GM12878 (cell line): ENCODE measurements at regions of chr17 and their contacts with region 1.

Region 1: DNA sequence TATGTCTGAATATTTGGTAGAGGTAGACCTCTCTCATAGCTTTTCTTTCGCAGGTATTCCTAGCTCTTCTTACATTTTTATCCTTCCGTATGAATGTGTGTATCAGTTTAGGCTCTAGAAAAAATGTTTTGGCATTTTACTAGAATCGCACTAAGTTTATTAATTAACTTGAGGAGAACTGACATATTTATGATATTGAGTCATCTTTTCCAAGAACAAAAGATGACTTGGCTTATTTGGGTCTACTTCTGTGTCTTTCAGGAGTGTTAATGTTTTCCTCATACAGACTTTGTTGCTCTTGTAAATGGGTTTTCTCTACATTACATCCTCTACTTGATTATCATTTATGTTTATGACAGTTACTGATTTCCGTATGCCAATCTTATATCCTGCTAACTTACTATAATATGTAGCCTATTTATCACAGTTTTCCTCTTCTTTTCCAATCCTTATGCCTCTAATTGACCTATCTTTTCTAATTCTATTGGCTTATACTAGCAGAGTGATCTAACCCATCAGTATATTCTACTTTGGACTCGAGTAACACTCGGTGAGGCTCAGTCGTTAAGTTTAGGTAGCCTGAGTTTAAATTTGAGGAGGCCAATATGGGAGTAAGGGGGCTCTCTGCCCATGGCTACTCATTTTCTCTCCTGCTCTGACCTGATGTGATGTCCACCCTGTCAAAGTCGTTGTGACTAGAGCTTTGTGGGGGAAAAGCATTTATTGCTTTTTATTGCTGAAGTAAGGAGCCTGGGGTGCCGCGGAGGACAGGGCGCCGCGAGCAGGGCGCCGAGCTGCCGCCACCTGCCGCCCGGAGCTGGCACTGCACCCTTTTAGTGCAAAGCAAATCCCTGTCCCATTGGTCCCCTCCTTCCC is 20.0 kb downstream of the ST6GALNAC1 start:
- DNase-seq: no peak
- ATAC-seq: peak; percentile 99
- H3K4me3 ChIP-seq: no peak overlapping the region
- H3K27ac ChIP-seq: no peak overlapping the region
- H3K4me1 ChIP-seq: no peaks in the 10 kb centered on the region
- H3K27me3 ChIP-seq: peaks cover 2 to 3% of the 10 kb centered on the region in 2 experiments; a peak in 3 of 4 replicates
- CTCF ChIP-seq: peak; percentile 90 to 97 (median 93); a peak in 5 of 6 replicates
- EP300 ChIP-seq: no peak
- POLR2A ChIP-seq: no peak
- RAD21 ChIP-seq: peak; percentile 81

Region 2: GRCh38 chr17:76153640-76154039 is 469.9 kb before region 1 on chr17:
- CTCF ChIA-PET with region 1: no interaction called
- POLR2A ChIA-PET with region 1: no interaction called
- RAD21 ChIA-PET with region 1: no interaction called
- SMC1A ChIA-PET with region 1: no interaction called
- in situ Hi-C with region 1: no loop called
- intact Hi-C with region 1: no loop called
- DNase-seq: no peak
- ATAC-seq: no peak
- H3K4me3 ChIP-seq: no peak overlapping the region
- H3K27ac ChIP-seq: no peak overlapping the region
- H3K4me1 ChIP-seq: no peaks in the 10 kb centered on the region
- H3K27me3 ChIP-seq: no peaks in the 10 kb centered on the region
- CTCF ChIP-seq: no peak
- EP300 ChIP-seq: no peak
- POLR2A ChIP-seq: no peak
- RAD21 ChIP-seq: no peak

Region 3: DNA sequence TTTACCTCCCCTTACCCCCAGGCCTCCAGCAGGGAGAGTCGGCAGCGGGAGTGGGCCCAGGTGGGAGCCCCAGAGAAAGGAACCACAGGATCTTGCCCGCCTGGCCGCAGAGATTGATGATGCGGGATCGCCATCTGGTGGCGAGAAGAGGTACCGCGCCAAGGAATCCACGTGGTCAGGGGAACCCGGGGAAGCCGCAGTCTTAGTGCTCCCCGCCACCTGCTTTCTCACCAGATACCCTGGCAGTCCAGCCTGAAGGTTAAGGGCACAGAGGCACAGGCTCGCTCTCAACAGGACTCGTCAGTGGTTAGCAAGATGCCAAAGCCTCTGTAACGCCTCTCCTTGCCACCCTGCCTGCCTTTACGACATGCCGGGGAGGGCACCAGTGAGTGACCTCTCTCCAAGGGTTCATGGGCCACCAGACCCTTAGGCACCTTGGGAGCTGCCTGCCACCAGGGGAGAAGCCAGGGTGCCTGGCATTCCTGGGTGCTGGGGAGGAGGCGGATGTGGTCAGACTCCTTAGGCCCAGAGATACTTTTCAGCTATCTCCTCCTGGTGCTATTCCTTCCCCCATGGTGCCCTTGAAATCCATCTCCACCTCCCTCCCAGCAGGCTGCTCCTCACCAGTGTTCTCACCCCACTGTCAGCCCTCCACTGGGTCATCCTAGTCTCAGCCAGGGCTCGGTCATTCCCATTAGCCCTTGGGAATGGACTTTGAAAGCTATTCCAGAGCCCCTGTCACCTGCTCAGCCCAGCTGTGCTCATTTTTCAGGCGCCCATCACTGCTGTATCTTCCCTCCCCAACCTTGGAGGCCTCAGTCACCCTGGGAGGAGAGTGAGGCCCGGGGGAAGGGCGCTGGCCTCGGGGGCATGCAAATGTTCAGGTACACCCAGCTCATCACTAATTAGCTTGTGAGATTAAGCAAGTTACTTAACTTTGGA is 116.8 kb before region 1 on chr17:
- CTCF ChIA-PET with region 1: interaction called, 12 read pairs
- POLR2A ChIA-PET with region 1: no interaction called
- RAD21 ChIA-PET with region 1: interaction called, 4 read pairs
- SMC1A ChIA-PET with region 1: no interaction called
- in situ Hi-C with region 1: no loop called
- intact Hi-C with region 1: no loop called
- DNase-seq: peak; percentile 40
- ATAC-seq: peak; percentile 92
- H3K4me3 ChIP-seq: no peak overlapping the region
- H3K27ac ChIP-seq: no peak overlapping the region
- H3K4me1 ChIP-seq: peaks cover 9% of the 10 kb centered on the region
- H3K27me3 ChIP-seq: no peaks in the 10 kb centered on the region; a peak in 1 of 4 replicates
- CTCF ChIP-seq: peak; percentile 89 to 99 (median 92); a peak in 5 of 6 replicates
- EP300 ChIP-seq: no peak
- POLR2A ChIP-seq: no peak
- RAD21 ChIP-seq: peak; percentile 97

Region 4: GRCh38 chr17:76534831-76535732 is 88.4 kb before region 1 on chr17:
- CTCF ChIA-PET with region 1: no interaction called
- POLR2A ChIA-PET with region 1: no interaction called
- RAD21 ChIA-PET with region 1: no interaction called
- SMC1A ChIA-PET with region 1: no interaction called
- in situ Hi-C with region 1: no loop called
- intact Hi-C with region 1: no loop called
- DNase-seq: no peak
- ATAC-seq: no peak
- H3K4me3 ChIP-seq: no peak overlapping the region
- H3K27ac ChIP-seq: no peak overlapping the region
- H3K4me1 ChIP-seq: no peaks in the 10 kb centered on the region
- H3K27me3 ChIP-seq: peaks cover 5 to 6% of the 10 kb centered on the region in 2 experiments
- CTCF ChIP-seq: no peak
- EP300 ChIP-seq: no peak
- POLR2A ChIP-seq: no peak
- RAD21 ChIP-seq: no peak

Region 5: GRCh38 chr17:76547184-76547641 is 76.3 kb before region 1 on chr17:
- CTCF ChIA-PET with region 1: interaction called, 20 read pairs
- POLR2A ChIA-PET with region 1: no interaction called
- RAD21 ChIA-PET with region 1: interaction called, 9 read pairs
- SMC1A ChIA-PET with region 1: interaction called, 10 read pairs
- in situ Hi-C with region 1: no loop called
- intact Hi-C with region 1: no loop called
- DNase-seq: no peak
- ATAC-seq: peak; percentile 93
- H3K4me3 ChIP-seq: no peak overlapping the region
- H3K27ac ChIP-seq: no peak overlapping the region
- H3K4me1 ChIP-seq: no peaks in the 10 kb centered on the region; the same call in 1 of the 2 replicates
- H3K27me3 ChIP-seq: peaks cover 0 to 3% of the 10 kb centered on the region in 2 experiments; a peak in 3 of 4 replicates
- CTCF ChIP-seq: peak; percentile 65 to 82 (median 80)
- EP300 ChIP-seq: no peak
- POLR2A ChIP-seq: no peak
- RAD21 ChIP-seq: peak; percentile 79

Region 6: DNA sequence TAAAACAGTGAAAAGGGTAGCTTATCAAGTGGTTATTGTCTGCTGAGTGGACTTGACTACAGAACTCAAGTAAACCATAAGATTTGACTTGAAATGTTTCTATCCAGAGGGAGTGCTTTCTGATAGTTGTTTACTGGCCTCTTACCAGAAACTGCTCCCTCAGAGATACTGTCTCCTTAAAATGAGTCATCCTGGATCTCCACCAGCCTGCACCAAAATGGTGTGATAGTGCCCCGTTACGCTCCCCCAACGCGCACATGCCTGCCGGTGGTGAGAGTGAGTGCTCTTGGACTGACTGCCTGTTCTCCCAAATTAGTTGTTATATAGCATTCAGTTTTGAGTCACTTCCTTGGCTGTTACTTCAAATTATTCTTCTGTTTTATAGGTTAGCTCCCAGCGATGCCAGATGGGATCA is 60.8 kb before region 1 on chr17:
- CTCF ChIA-PET with region 1: interaction called, 146 read pairs
- POLR2A ChIA-PET with region 1: interaction called, 5 read pairs
- RAD21 ChIA-PET with region 1: interaction called, 33 read pairs
- SMC1A ChIA-PET with region 1: interaction called, 87 read pairs
- in situ Hi-C with region 1: no loop called
- intact Hi-C with region 1: loop called (anchors 2 kb)
- DNase-seq: no peak
- ATAC-seq: peak; percentile 9; the same call in 2 of the 3 replicates
- H3K4me3 ChIP-seq: 0 out of 2 replicates have a peak overlapping the region, but pooled peaks have one; percentile 1
- H3K27ac ChIP-seq: peak overlapping the region; percentile 33; the same call in 1 of the 2 replicates
- H3K4me1 ChIP-seq: peaks cover 23% of the 10 kb centered on the region
- H3K27me3 ChIP-seq: no peaks in the 10 kb centered on the region
- CTCF ChIP-seq: no peak
- EP300 ChIP-seq: no peak
- POLR2A ChIP-seq: no peak
- RAD21 ChIP-seq: no peak

Region 7: GRCh38 chr17:76578344-76578979 is 45.0 kb before region 1 on chr17:
- CTCF ChIA-PET with region 1: interaction called, 13 read pairs
- POLR2A ChIA-PET with region 1: interaction called, 4 read pairs
- RAD21 ChIA-PET with region 1: no interaction called
- SMC1A ChIA-PET with region 1: no interaction called
- in situ Hi-C with region 1: no loop called
- intact Hi-C with region 1: no loop called
- DNase-seq: no peak
- ATAC-seq: no peak
- H3K4me3 ChIP-seq: no peak overlapping the region
- H3K27ac ChIP-seq: no peak overlapping the region
- H3K4me1 ChIP-seq: peaks cover 24% of the 10 kb centered on the region
- H3K27me3 ChIP-seq: no peaks in the 10 kb centered on the region
- CTCF ChIP-seq: no peak
- EP300 ChIP-seq: no peak
- POLR2A ChIP-seq: no peak
- RAD21 ChIP-seq: no peak

Region 8: DNA sequence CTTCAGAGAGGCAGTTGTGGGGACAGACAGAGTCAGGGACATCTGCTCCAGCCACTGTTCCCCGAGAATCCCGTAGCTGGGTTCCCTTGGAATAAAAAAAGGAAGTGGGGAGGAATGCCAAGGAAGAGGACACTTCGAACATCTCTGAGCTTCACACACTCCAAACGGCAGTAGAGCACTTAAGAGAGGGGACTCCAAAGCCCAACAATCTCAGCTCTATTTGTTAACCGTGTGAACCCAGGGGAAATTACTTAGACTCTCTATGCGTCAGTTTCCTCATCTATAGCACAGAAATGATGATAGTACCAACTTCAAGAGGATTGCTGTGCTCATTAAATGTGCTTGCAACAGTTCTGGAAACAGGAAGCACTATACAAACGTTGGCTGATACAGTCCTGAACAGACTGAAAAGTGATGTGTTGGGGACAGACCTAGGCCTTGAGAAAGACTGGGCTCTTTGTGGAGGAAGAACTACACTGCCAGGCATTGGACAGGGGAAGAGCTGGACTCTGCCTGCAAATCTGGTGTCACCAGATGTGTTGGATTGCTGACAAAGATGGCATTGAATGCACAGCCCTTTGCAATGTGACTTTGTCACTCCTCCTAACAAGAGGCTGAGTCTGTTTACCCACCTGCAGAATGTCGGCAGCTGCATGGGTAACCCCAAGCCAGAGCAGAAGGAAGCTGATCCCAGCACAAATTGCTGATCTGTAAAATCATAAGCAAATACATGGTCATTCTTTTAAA is 25.6 kb before region 1 on chr17:
- CTCF ChIA-PET with region 1: interaction called, 13 read pairs
- POLR2A ChIA-PET with region 1: interaction called, 4 read pairs
- RAD21 ChIA-PET with region 1: interaction called, 6 read pairs
- SMC1A ChIA-PET with region 1: interaction called, 8 read pairs
- in situ Hi-C with region 1: no loop called
- intact Hi-C with region 1: no loop called
- DNase-seq: no peak
- ATAC-seq: peak; percentile 62
- H3K4me3 ChIP-seq: no peak overlapping the region
- H3K27ac ChIP-seq: no peak overlapping the region
- H3K4me1 ChIP-seq: no peaks in the 10 kb centered on the region
- H3K27me3 ChIP-seq: no peaks in the 10 kb centered on the region
- CTCF ChIP-seq: no peak
- EP300 ChIP-seq: no peak
- POLR2A ChIP-seq: no peak
- RAD21 ChIP-seq: no peak

Region 9: DNA sequence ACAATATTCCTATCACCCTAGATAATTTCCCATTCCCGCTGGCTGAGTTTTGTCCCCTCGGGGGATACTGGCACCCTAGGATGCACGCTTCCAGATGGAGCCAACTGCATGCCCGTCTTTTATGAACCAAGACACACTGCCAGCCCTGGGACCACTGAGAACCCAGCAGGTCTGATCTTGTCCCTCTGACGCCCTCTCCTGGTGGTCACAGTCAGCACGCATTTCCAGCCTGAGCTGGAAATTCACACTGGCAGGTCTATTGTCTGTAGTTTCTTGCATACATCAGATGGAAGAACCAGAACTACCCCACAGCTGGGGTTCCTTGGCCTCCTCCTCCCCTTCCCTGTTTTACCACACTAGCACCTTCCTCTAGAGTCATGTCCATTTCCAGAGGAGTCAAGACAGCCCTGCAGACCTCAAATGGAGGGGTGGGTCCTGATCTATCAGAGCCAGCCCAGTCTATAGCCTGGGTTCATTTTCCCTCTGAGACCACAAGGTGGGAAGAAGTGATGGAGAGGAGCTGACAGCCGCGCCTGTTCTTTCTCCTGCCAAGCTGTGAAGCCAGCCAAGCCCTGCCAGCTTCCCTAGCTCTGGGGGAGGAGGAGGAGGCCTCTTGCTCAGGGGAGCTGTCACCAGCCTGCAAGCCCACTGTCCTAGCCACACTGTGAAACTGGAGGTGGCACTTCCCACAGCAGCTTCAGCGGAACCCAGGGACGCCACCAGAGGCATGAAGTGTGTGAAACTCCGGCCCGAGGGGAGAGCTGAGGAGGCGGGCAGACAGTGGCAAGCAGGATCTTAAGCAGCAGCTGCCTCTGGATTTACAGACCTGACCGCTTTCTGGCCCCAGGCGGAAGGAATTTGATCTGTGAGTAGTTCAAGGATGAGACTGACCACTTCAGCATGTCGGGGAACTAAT is 58.0 kb after region 1 on chr17:
- CTCF ChIA-PET with region 1: interaction called, 37 read pairs
- POLR2A ChIA-PET with region 1: no interaction called
- RAD21 ChIA-PET with region 1: interaction called, 15 read pairs
- SMC1A ChIA-PET with region 1: interaction called, 8 read pairs
- in situ Hi-C with region 1: no loop called
- intact Hi-C with region 1: no loop called
- DNase-seq: no peak
- ATAC-seq: peak; percentile 94
- H3K4me3 ChIP-seq: no peak overlapping the region
- H3K27ac ChIP-seq: no peak overlapping the region
- H3K4me1 ChIP-seq: no peaks in the 10 kb centered on the region
- H3K27me3 ChIP-seq: peaks cover 0 to 5% of the 10 kb centered on the region in 2 experiments; a peak in 2 of 4 replicates
- CTCF ChIP-seq: peak; percentile 81 to 86 (median 83)
- EP300 ChIP-seq: no peak
- POLR2A ChIP-seq: no peak
- RAD21 ChIP-seq: peak; percentile 82